ENCODE measurements at regions of chr3 and their contacts with region 1.

Region 1: DNA sequence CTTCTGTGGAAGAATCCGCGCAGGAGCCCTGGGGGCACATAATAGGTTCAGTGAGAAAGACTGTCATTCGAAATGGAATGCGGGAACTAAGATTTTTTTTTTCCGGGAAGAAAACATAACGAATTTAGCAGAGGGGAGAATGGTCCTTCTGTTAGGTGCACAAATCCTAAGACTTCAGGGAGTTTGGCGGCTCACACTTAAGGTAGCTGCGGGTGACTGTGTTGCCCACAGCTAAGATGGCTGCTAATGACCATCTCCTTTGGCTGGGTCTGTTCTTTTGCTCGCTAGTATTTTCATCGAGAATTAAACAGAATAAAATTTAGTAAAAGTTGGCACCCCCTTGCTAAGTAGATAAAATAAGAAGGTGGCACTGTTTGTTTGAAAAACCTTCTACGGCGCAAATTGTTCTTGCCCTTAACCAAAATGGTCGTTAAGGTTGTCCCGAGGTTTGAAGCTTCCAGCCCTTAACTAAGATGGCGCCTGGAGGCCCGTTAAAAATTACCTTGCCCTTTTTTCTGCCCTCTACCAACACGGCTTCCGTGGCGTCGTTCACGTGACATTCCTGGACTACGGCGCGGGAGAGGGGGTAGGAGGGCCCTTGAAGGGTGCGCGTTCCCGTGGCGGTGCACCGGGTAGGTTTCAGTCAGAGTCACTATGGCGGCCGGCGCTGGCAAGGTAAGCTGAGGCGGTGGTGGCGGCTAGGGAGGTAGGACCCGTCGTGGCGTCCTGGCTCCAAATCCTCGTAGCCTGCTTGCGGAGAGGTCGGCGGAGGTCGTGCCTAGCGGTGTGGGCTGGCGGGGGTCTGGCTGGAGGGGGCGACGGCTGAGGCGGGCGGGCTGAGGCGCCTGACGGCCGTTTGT is at the start of gene SLMAP:
- DNase-seq: peak; percentile 84 to 97 (median 95)
- ATAC-seq: peak; percentile 98
- H3K4me3 ChIP-seq: peak within 1 kb of the TSS; percentile 80
- H3K4me3 Mint-ChIP-seq: peak within 1 kb of the TSS; percentile 92 to 98 (median 97)
- H3K27ac ChIP-seq: peak within 1 kb of the TSS; percentile 84
- H3K27ac Mint-ChIP-seq: peak within 1 kb of the TSS; percentile 88 to 96 (median 92)
- H3K4me1 ChIP-seq: peaks cover 23 to 29% of the 10 kb centered on the region in 2 donors
- H3K4me1 Mint-ChIP-seq: peaks cover 17 to 45% (median 41%) of the 10 kb centered on the region in 7 donors
- H3K27me3 ChIP-seq: no peaks in the 10 kb centered on the region
- H3K27me3 Mint-ChIP-seq: peaks cover 0 to 8% (median 0%) of the 10 kb centered on the region in 5 donors
- total RNA-seq, gene SLMAP: 54.6 to 77.1 (median 66.6) TPM

Region 2: GRCh38 chr3:57199895-57200297 is 556.0 kb before region 1 on chr3 and contains the start of gene HESX1:
- CTCF ChIA-PET with region 1: no interaction called
- POLR2A ChIA-PET with region 1: no interaction called
- intact Hi-C with region 1: no loop called
- DNase-seq: no peak
- ATAC-seq: no peak
- H3K4me3 ChIP-seq: no peak within 1 kb of the TSS
- H3K4me3 Mint-ChIP-seq: no peak within 1 kb of the TSS
- H3K27ac ChIP-seq: no peak within 1 kb of the TSS
- H3K27ac Mint-ChIP-seq: peak within 1 kb of the TSS in 1 of 9 donors; percentile 41
- H3K4me1 ChIP-seq: no peaks in the 10 kb centered on the region
- H3K4me1 Mint-ChIP-seq: peaks cover 0 to 5% (median 0%) of the 10 kb centered on the region in 7 donors
- H3K27me3 ChIP-seq: no peaks in the 10 kb centered on the region
- H3K27me3 Mint-ChIP-seq: peaks cover 9 to 20% (median 12%) of the 10 kb centered on the region in 5 donors
- total RNA-seq, gene HESX1: not detected

Region 3: DNA sequence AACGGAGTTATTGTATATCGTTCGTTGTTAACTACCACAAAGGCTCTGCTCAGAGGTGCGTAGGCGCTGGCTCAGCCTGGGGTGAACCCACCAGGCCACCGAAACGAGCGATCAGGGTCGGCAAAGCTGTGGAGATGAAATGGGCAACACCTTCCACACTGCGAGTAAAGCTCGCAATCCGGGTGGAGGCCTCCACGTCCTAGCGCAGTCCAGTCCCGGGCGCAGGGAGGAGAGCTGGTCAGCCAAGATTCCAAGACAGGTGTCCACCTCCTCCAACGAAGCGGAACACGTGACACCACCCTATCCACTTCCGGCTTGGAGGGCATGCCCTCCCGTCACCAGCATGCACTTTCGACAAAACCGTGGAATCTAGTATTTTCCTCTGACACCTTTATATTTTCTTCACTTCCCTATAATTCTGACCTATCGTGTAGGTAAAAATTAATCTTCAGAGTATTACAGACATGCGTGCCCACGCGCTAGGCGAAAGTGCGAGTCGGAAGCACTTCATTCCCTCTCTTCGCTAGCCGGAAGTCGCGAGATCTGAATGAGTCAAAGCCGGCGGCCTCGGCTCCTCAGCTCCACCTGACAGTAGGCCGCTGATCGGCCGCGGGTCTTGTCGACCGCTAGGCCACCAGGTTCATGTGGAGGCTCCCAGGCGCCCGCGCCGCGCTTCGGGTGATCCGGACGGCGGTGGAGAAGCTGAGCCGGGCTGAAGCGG is 200.0 kb before region 1 on chr3 and contains the start of gene PDE12:
- CTCF ChIA-PET with region 1: no interaction called
- POLR2A ChIA-PET with region 1: interaction called, 20 read pairs
- intact Hi-C with region 1: loop called (anchors 1 kb)
- DNase-seq: peak; percentile 68 to 87 (median 81)
- ATAC-seq: peak; percentile 86
- H3K4me3 ChIP-seq: peak within 1 kb of the TSS; percentile 74
- H3K4me3 Mint-ChIP-seq: peak within 1 kb of the TSS; percentile 85 to 99 (median 92)
- H3K27ac ChIP-seq: peak within 1 kb of the TSS; percentile 96
- H3K27ac Mint-ChIP-seq: peak within 1 kb of the TSS; percentile 94 to 99 (median 98)
- H3K4me1 ChIP-seq: peaks cover 22 to 26% of the 10 kb centered on the region in 2 donors
- H3K4me1 Mint-ChIP-seq: peaks cover 13 to 50% (median 39%) of the 10 kb centered on the region in 7 donors
- H3K27me3 ChIP-seq: no peaks in the 10 kb centered on the region
- H3K27me3 Mint-ChIP-seq: no peaks in the 10 kb centered on the region
- total RNA-seq, gene PDE12: 24.0 to 35.5 (median 27.8) TPM

Region 4: GRCh38 chr3:57646723-57647122 is 109.2 kb before region 1 on chr3:
- CTCF ChIA-PET with region 1: no interaction called
- POLR2A ChIA-PET with region 1: no interaction called
- intact Hi-C with region 1: no loop called
- DNase-seq: peak in 5 of 9 donors; percentile 8 to 20 (median 12)
- ATAC-seq: no peak
- H3K4me3 ChIP-seq: no peak overlapping the region
- H3K4me3 Mint-ChIP-seq: no peak overlapping the region
- H3K27ac ChIP-seq: no peak overlapping the region
- H3K27ac Mint-ChIP-seq: peak overlapping the region in 8 of 9 donors; percentile 43 to 81 (median 66)
- H3K4me1 ChIP-seq: no peaks in the 10 kb centered on the region
- H3K4me1 Mint-ChIP-seq: peaks cover 6 to 27% (median 22%) of the 10 kb centered on the region in 7 donors
- H3K27me3 ChIP-seq: no peaks in the 10 kb centered on the region
- H3K27me3 Mint-ChIP-seq: no peaks in the 10 kb centered on the region

Region 5: GRCh38 chr3:57772251-57772650 is 16.4 kb after region 1 on chr3:
- CTCF ChIA-PET with region 1: no interaction called
- POLR2A ChIA-PET with region 1: interaction called, 3 read pairs
- intact Hi-C with region 1: loop called in 1 of 2 experiments (anchors 2 kb)
- DNase-seq: no peak
- ATAC-seq: no peak
- H3K4me3 ChIP-seq: no peak overlapping the region
- H3K4me3 Mint-ChIP-seq: no peak overlapping the region
- H3K27ac ChIP-seq: no peak overlapping the region
- H3K27ac Mint-ChIP-seq: no peak overlapping the region
- H3K4me1 ChIP-seq: no peaks in the 10 kb centered on the region
- H3K4me1 Mint-ChIP-seq: peaks cover 14 to 63% (median 49%) of the 10 kb centered on the region in 7 donors
- H3K27me3 ChIP-seq: no peaks in the 10 kb centered on the region
- H3K27me3 Mint-ChIP-seq: no peaks in the 10 kb centered on the region

Region 6: GRCh38 chr3:57826245-57826951 is 70.5 kb after region 1 on chr3:
- CTCF ChIA-PET with region 1: interaction called, 3 read pairs
- POLR2A ChIA-PET with region 1: interaction called, 7 read pairs
- intact Hi-C with region 1: loop called in 1 of 2 experiments (anchors 1 kb)
- DNase-seq: peak in 1 of 9 donors; percentile 22
- ATAC-seq: no peak
- H3K4me3 ChIP-seq: no peak overlapping the region
- H3K4me3 Mint-ChIP-seq: peak overlapping the region in 1 of 10 donors; percentile 22
- H3K27ac ChIP-seq: no peak overlapping the region
- H3K27ac Mint-ChIP-seq: peak overlapping the region in 5 of 9 donors; percentile 14 to 62 (median 51)
- H3K4me1 ChIP-seq: peaks cover 0 to 4% of the 10 kb centered on the region in 2 donors
- H3K4me1 Mint-ChIP-seq: peaks cover 6 to 43% (median 37%) of the 10 kb centered on the region in 7 donors
- H3K27me3 ChIP-seq: no peaks in the 10 kb centered on the region
- H3K27me3 Mint-ChIP-seq: no peaks in the 10 kb centered on the region

Measured in naive thymus-derived CD4-positive, alpha-beta T cell (primary cell).